HEK293 (cell line): ENCODE measurements at regions of chr16 and their contacts with region 1.

Region 1: GRCh38 chr16:740764-741505 is at the start of gene CIAO3:
- H3K4me3 ChIP-seq: peak within 1 kb of the TSS; percentile 80
- H3K27ac ChIP-seq: peak within 1 kb of the TSS; percentile 67; the same call in 1 of the 2 replicates
- H3K4me1 ChIP-seq: 0 out of 2 replicates have a peak, but pooled peaks cover 2% of the 10 kb centered on the region
- CTCF ChIP-seq: peak; percentile 99

Region 2: DNA sequence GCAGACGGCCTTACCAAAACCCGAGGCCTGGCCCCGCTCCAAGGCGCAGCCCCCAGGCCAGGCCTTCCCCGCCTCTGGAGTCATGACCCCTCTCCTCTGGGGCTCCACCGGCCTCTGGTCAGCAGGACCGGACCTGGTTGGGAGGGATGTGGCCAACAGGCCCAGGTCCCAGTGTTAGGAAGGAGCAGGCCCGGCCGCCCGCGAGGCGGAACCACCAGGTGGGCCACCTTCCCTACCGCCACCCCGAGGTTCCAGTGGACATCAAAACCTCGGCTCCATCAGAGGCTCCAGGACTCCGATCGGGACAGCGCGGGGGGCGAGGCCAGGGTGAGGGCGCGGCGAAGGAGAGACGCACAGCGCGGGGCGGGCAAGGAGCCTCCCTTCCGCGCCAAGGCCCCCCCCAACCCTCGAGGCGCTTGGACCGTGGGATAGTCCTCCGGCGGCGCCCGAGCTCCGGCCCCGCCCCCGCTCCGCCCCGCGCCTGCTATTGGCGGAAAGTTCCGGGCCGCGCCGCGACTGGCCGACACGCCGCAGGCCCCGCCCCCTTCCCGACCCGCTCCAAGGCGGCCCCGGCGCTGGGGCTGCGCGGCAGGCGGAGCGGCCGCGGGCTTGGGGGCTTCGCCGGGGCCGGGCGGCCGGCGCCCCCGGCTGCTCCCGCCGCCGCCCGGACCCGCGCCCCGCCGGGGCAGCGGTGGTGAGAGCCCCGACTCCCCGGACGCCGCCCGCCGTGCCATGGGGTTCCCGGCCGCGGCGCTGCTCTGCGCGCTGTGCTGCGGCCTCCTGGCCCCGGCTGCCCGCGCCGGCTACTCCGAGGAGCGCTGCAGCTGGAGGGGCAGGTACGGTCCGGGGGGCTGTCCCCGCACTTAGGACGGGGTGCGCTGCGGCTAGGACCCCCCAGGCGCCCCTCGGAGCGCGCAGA is 26.1 kb before region 1 on chr16 and contains the start of gene METRN:
- CTCF ChIA-PET with region 1: interaction called, 11 read pairs
- POLR2A ChIA-PET with region 1: interaction called, 4 read pairs
- H3K4me3 ChIP-seq: peak within 1 kb of the TSS; percentile 44
- H3K27ac ChIP-seq: peak within 1 kb of the TSS; percentile 66; the same call in 1 of the 2 replicates
- H3K4me1 ChIP-seq: peaks cover 9% of the 10 kb centered on the region
- CTCF ChIP-seq: no peak

Region 3: GRCh38 chr16:728131-728889 is 12.6 kb before region 1 on chr16:
- CTCF ChIA-PET with region 1: interaction called, 5 read pairs
- POLR2A ChIA-PET with region 1: interaction called, 11 read pairs
- H3K4me3 ChIP-seq: peak overlapping the region; percentile 15
- H3K27ac ChIP-seq: no peak overlapping the region
- H3K4me1 ChIP-seq: peaks cover 4% of the 10 kb centered on the region; the same call in 1 of the 2 replicates
- CTCF ChIP-seq: no peak

Region 4: GRCh38 chr16:756428-756827 is 15.5 kb after region 1 on chr16:
- CTCF ChIA-PET with region 1: interaction called, 12 read pairs
- POLR2A ChIA-PET with region 1: no interaction called
- H3K4me3 ChIP-seq: no peak overlapping the region
- H3K27ac ChIP-seq: no peak overlapping the region
- H3K4me1 ChIP-seq: no peaks in the 10 kb centered on the region
- CTCF ChIP-seq: no peak